Head of caudate nucleus (tissue), 42 donors: ENCODE measurements at regions of chr6 and their contacts with region 1.

Region 1: GRCh38 chr6:73732845-73733675 is 37.1 kb downstream of the CD109 start:
- DNase-seq: peak; percentile 39 to 86 (median 68)

Region 2: DNA sequence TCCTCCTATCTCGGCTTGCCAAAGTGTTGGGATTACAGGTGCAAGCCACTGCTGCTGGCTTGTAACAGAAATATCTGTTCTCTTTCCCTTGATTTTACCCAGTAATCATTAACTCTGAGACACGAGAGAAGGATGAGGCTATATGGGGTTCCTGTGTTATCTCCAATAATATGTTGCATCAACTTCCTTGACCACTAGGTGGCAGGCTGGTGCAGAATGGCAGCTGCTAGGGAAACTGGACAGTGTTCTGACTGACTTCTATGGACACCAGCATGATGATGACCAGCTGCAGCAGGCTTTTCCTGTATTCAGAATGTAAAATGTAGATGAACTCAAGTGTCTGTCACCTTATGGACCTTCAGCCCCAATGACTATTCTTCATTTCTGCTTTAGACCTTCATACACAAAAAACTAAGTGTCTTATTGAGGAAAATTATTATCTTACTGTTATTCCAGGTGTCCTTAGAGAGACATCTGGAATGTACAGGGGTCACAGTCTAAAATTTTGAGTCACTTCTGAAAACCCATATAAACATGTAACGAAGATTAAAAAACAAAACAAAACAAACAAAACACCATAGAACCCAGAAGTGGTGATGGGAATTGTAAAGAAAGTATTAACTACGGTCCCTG is 57.5 kb before region 1 on chr6:
- intact Hi-C with region 1: loop called (anchors 10 kb)
- DNase-seq: peak; percentile 24 to 93 (median 77)